Activated CD4-positive, alpha-beta memory T cell treated with anti-CD3 and anti-CD28 coated beads, Interleukin-2, amount 10 ng/mL, durations not matched to agents 7 days and 5 days (primary cell): ENCODE measurements at regions of chr19 and their contacts with region 1.

Region 1: GRCh38 chr19:38952395-38953165 is 21.8 kb downstream of the MRPS12 start:
- DNase-seq: peak; percentile 52
- H3K4me3 Mint-ChIP-seq: no peak overlapping the region
- H3K27ac Mint-ChIP-seq: no peak overlapping the region
- H3K4me1 Mint-ChIP-seq: peaks cover 15% of the 10 kb centered on the region
- H3K27me3 Mint-ChIP-seq: peaks cover 27% of the 10 kb centered on the region

Region 2: DNA sequence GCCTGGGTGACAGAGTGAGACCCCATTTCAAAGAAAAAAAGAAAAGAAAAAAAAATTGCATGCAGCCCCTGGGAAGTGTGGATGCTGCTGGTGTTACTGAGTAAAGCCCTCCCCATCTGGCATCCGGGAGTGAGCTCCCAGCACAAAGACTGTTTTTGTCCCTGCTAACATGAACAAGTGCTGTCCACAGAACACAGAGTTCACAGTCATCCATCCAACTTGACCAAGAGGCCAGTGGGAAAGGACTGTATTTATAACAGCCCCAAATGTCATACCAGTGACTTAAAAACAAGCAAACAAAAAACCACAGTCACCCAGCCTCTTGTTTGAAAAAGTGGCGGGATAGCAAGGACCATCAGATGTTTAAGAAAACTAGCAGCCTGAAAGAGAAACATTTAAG is 12.2 kb after region 1 on chr19:
- CTCF ChIA-PET with region 1: interaction called, 11 read pairs
- POLR2A ChIA-PET with region 1: no interaction called
- DNase-seq: no peak
- H3K4me3 Mint-ChIP-seq: no peak overlapping the region
- H3K27ac Mint-ChIP-seq: no peak overlapping the region
- H3K4me1 Mint-ChIP-seq: no peaks in the 10 kb centered on the region
- H3K27me3 Mint-ChIP-seq: peaks cover 7% of the 10 kb centered on the region